ENCODE measurements at regions of chr19 and their contacts with region 1.

Region 1: GRCh38 chr19:35066691-35067563 is 25.4 kb downstream of the HPN start:
- DNase-seq: peak; percentile 85 to 93 (median 87)
- ATAC-seq: peak; percentile 98
- H3K4me3 ChIP-seq: no peak overlapping the region
- H3K27ac ChIP-seq: no peak overlapping the region
- H3K4me1 ChIP-seq: peaks cover 5 to 9% of the 10 kb centered on the region in 2 experiments; a peak in 3 of 5 replicates
- H3K27me3 ChIP-seq: no peaks in the 10 kb centered on the region; a peak in 1 of 5 replicates
- CTCF ChIP-seq: peak; percentile 89 to 94 (median 94)
- EP300 ChIP-seq: no peak; the same call in 1 of the 2 replicates
- POLR2A ChIP-seq: no peak
- RAD21 ChIP-seq: peak; percentile 70 to 90

Region 2: GRCh38 chr19:35044317-35045117 is 22.4 kb before region 1 on chr19:
- CTCF ChIA-PET with region 1: interaction called, 5 read pairs
- POLR2A ChIA-PET with region 1: interaction called, 4 read pairs
- in situ Hi-C with region 1: no loop called
- intact Hi-C with region 1: loop called (anchors 1 kb)
- DNase-seq: peak; percentile 74 to 80 (median 77)
- ATAC-seq: no peak
- H3K4me3 ChIP-seq: no peak overlapping the region
- H3K27ac ChIP-seq: no peak overlapping the region
- H3K4me1 ChIP-seq: peaks cover 21 to 40% of the 10 kb centered on the region in 2 experiments
- H3K27me3 ChIP-seq: 0 out of 5 replicates have a peak, but pooled peaks cover 0 to 4% of the 10 kb centered on the region in 2 experiments
- CTCF ChIP-seq: peak; percentile 88 to 98 (median 89)
- EP300 ChIP-seq: no peak
- POLR2A ChIP-seq: no peak
- RAD21 ChIP-seq: peak; percentile 48 to 67

Region 3: GRCh38 chr19:35090506-35091237 is 23.7 kb after region 1 on chr19:
- CTCF ChIA-PET with region 1: interaction called, 4 read pairs
- POLR2A ChIA-PET with region 1: interaction called, 3 read pairs
- in situ Hi-C with region 1: no loop called
- intact Hi-C with region 1: loop called (anchors 1 kb)
- DNase-seq: peak; percentile 79 to 87 (median 84)
- ATAC-seq: peak; percentile 88
- H3K4me3 ChIP-seq: no peak overlapping the region
- H3K27ac ChIP-seq: no peak overlapping the region
- H3K4me1 ChIP-seq: peaks cover 10 to 38% of the 10 kb centered on the region in 2 experiments; a peak in 4 of 5 replicates
- H3K27me3 ChIP-seq: peaks cover 0 to 4% of the 10 kb centered on the region in 2 experiments; a peak in 1 of 5 replicates
- CTCF ChIP-seq: peak; percentile 67 to 70 (median 67)
- EP300 ChIP-seq: no peak; the same call in 1 of the 2 replicates
- POLR2A ChIP-seq: no peak
- RAD21 ChIP-seq: peak; percentile 39 to 66

Region 4: DNA sequence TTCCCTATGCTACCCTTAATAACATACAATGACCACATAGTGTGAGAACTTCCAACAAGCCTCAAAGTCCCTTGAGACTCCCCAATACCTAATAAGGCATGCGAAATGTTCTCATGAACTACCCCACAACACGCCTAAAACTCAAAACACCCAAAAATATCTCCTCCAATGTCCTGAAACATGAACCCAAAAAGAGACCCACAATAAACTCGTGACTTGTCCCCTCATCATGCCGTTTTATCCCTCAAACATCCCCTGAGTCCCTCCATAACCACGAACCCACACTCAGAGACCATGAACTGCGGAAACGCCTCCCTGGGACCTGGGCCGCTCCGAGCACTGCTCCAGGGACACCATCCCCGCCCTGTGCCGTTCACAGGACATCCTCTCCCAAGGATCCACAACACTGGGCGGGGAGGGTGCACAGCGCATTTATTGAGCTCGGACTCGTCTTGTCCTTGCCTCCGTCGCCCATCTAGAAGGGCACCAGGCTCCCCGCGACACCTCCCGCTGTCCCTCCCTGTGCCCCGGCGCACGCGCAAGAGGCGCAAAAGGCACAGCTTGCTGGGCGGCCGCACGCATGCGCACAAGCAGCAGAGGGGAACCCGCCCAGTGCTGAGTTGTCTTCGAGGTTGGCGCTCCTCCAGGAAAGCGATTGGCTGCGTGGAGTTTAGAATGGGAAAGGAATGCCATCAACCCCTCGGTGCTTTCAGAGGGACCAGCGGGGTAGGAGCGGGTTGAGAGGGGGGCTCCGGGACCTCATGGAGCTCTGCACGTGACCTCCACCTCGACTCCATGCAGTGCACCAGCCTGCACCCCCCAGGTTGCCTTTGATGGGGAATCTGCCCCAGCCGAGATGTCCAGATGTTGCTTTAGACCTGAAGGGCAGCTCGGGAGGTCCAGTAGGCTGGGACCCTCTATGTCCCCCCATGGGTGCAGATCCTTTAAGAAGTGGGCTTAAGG is 57.5 kb after region 1 on chr19:
- CTCF ChIA-PET with region 1: no interaction called
- POLR2A ChIA-PET with region 1: interaction called, 5 read pairs
- in situ Hi-C with region 1: loop called (anchors 5 kb)
- intact Hi-C with region 1: no loop called
- DNase-seq: peak; percentile 94 to 99 (median 98)
- ATAC-seq: peak; percentile 98
- H3K4me3 ChIP-seq: peak overlapping the region; percentile 39
- H3K27ac ChIP-seq: peak overlapping the region; percentile 29; the same call in 2 of the 3 replicates
- H3K4me1 ChIP-seq: peaks cover 8 to 34% of the 10 kb centered on the region in 2 experiments; a peak in 4 of 5 replicates
- H3K27me3 ChIP-seq: peaks cover 0 to 10% of the 10 kb centered on the region in 2 experiments; a peak in 1 of 5 replicates
- CTCF ChIP-seq: no peak
- EP300 ChIP-seq: no peak
- POLR2A ChIP-seq: peak; percentile 79
- RAD21 ChIP-seq: no peak

Region 5: GRCh38 chr19:35135389-35135909 is 68.5 kb after region 1 on chr19:
- CTCF ChIA-PET with region 1: interaction called, 12 read pairs
- POLR2A ChIA-PET with region 1: no interaction called
- in situ Hi-C with region 1: no loop called
- intact Hi-C with region 1: loop called (anchors 1 kb)
- DNase-seq: peak; percentile 86 to 93 (median 92)
- ATAC-seq: peak; percentile 98
- H3K4me3 ChIP-seq: no peak overlapping the region
- H3K27ac ChIP-seq: no peak overlapping the region
- H3K4me1 ChIP-seq: peaks cover 3 to 36% of the 10 kb centered on the region in 2 experiments; a peak in 3 of 5 replicates
- H3K27me3 ChIP-seq: peaks cover 2 to 28% of the 10 kb centered on the region in 2 experiments; a peak in 4 of 5 replicates
- CTCF ChIP-seq: peak; percentile 92 to 94 (median 92)
- EP300 ChIP-seq: no peak
- POLR2A ChIP-seq: no peak
- RAD21 ChIP-seq: peak; percentile 66 to 85

Measured in K562 (cell line).